PC-9 (cell line): ENCODE measurements at regions of chr14 and their contacts with region 1.

Region 1: DNA sequence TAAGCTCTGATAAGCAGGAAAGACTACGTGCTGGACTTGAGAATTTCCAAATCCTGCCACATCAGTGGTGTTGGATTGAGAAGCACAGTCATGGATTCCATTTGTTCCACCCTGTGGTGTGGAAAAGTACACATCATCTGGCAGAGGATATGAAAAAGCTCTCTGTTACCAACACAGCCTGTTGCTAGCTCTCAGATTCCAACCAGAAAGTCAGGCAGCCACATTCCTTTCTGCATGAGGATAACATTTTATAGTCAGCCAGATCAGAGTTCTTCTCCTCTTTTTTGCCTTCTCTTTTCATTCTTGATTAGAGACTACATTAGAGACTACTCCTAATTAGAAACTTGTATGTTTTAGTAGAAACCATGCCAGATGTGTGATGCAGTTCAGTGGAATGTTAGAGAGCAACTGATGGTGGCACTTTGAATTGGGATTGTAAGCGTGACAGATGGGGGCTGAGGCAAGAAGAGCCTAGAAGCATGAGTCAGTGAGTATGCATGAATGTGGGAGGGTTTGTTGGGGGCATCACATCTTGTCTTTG is 61.2 kb upstream of the STXBP6 start:
- DNase-seq: peak; percentile 53 to 80
- H3K4me3 ChIP-seq: no peak overlapping the region
- H3K27ac ChIP-seq: peak overlapping the region; percentile 32; the same call in 1 of the 2 replicates
- H3K4me1 ChIP-seq: no peaks in the 10 kb centered on the region; the same call in 1 of the 2 replicates
- H3K27me3 ChIP-seq: no peaks in the 10 kb centered on the region
- CTCF ChIP-seq: no peak

Region 2: DNA sequence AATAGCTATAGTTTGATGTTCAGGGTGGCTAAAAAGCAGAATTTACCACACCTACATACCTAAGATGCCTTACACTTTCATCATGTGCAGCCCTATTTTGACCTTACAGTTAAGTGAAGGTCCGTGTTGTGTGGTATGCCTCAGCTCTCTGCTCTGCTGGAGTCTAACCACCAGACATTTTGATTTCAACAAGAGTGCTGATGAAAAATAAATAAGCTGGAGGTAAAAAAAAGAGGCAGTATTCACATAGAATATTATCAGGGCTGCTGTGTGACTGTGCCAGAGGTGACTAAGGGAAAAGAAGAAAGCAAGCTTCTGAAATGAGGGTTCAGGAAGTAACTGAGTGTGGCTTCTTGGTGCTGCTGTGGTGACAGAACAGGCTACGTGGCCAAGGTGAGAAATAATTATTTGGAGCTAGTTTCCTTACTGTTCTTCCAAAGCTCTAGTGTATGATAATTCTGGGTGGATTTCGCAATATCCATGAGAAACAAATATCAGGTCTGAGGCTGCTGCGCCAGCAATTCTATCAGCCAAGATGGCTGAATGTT is 250.0 kb before region 1 on chr14:
- CTCF ChIA-PET with region 1: no interaction called
- POLR2A ChIA-PET with region 1: interaction called, 4 read pairs
- intact Hi-C with region 1: loop called (anchors 5 kb)
- DNase-seq: peak; percentile 42 to 87
- H3K4me3 ChIP-seq: peak overlapping the region; percentile 46; the same call in 1 of the 2 replicates
- H3K27ac ChIP-seq: peak overlapping the region; percentile 80
- H3K4me1 ChIP-seq: peaks cover 15% of the 10 kb centered on the region
- H3K27me3 ChIP-seq: no peaks in the 10 kb centered on the region
- CTCF ChIP-seq: no peak

Region 3: DNA sequence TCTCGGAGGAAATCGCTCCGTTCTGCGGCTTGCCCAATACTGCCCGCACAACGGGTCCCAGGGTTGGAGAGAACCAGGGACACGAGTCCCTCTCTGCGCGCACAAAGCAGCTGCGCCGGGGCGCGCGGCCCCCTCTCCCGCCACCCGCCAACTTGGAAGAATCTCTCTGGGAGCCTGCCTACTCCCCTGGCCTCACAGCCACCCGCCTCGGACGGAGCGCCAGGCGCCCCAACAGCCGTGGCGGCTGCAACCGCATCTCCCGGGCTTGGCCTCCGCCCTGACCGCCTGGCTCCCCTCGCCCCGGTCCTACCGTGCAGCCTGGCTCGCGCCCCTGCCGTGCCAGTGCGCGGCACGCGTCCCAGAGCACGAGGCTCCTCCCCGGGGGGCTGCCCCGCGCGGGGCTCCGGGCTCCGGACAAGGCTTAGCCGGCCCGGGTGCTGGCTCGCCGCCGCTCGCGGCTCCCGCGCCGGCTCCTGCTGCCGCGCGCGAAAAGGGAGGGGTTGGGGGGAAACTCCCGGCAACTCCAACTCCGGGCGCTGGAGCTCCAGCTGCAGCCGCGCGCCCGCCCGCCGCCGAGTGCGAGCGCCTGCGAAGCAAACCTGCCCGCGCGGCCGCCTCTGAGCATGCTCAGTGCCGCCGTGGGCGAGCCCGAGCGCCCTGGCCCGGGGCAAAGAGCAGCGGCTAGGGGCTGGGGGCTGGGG is 61.4 kb before region 1 on chr14 and contains the start of gene STXBP6:
- CTCF ChIA-PET with region 1: no interaction called
- POLR2A ChIA-PET with region 1: no interaction called
- intact Hi-C with region 1: loop called (anchors 1 kb)
- DNase-seq: peak in 1 of 2 experiments; percentile 66
- H3K4me3 ChIP-seq: peak within 1 kb of the TSS; percentile 52
- H3K27ac ChIP-seq: no peak within 1 kb of the TSS
- H3K4me1 ChIP-seq: no peaks in the 10 kb centered on the region
- H3K27me3 ChIP-seq: peaks cover 33% of the 10 kb centered on the region
- CTCF ChIP-seq: no peak
- total RNA-seq, gene STXBP6: 10.0 and 12.3 TPM in 2 replicates

Region 4: GRCh38 chr14:25090716-25091454 is 20.2 kb before region 1 on chr14:
- CTCF ChIA-PET with region 1: no interaction called
- POLR2A ChIA-PET with region 1: no interaction called
- intact Hi-C with region 1: loop called (anchors 2 kb)
- DNase-seq: peak; percentile 71 to 86
- H3K4me3 ChIP-seq: no peak overlapping the region
- H3K27ac ChIP-seq: peak overlapping the region; percentile 44
- H3K4me1 ChIP-seq: peaks cover 4% of the 10 kb centered on the region; the same call in 1 of the 2 replicates
- H3K27me3 ChIP-seq: no peaks in the 10 kb centered on the region
- CTCF ChIP-seq: no peak